Right ventricle myocardium inferior (tissue), 1 donor: ENCODE measurements at regions of chr15 and their contacts with region 1.

Region 1: GRCh38 chr15:90001683-90002427 is 731 bp downstream of the ZNF710 start:
- DNase-seq: peak; percentile 79
- ATAC-seq: peak; percentile 31

Region 2: DNA sequence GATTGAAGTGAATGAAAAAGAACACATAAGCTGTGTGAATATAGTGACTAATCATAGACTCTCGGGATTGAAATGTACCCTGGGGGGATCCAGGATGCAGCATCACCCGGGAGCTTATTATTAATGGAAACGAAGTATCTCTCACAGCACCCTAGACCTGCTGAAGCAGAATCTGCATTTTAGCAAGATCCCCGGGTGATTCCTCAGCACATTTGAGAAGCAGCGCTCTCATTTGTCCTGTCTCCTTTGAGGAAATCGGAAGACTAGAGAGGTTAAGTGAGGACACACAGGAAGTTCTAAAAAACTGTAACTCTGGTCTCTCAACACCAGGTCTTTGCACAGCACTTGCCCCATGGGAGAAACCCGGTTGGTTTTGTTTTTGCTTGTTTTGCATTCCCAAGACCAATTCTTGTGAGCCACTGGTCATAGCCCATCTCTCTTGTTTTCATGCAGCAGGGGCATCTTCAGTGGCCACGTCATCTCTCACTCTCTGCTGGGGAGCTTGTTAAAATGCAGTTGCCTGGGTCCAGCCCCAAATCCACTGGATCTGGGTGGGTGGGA is 29.5 kb after region 1 on chr15:
- intact Hi-C with region 1: loop called (anchors 2 kb)
- DNase-seq: no peak
- ATAC-seq: peak; percentile 38

Region 3: GRCh38 chr15:90071208-90071807 is 69.5 kb after region 1 on chr15:
- intact Hi-C with region 1: loop called (anchors 2 kb)
- DNase-seq: peak; percentile 87
- ATAC-seq: peak; percentile 74